ENCODE measurements at regions of chr1 and their contacts with region 1.

Region 1: DNA sequence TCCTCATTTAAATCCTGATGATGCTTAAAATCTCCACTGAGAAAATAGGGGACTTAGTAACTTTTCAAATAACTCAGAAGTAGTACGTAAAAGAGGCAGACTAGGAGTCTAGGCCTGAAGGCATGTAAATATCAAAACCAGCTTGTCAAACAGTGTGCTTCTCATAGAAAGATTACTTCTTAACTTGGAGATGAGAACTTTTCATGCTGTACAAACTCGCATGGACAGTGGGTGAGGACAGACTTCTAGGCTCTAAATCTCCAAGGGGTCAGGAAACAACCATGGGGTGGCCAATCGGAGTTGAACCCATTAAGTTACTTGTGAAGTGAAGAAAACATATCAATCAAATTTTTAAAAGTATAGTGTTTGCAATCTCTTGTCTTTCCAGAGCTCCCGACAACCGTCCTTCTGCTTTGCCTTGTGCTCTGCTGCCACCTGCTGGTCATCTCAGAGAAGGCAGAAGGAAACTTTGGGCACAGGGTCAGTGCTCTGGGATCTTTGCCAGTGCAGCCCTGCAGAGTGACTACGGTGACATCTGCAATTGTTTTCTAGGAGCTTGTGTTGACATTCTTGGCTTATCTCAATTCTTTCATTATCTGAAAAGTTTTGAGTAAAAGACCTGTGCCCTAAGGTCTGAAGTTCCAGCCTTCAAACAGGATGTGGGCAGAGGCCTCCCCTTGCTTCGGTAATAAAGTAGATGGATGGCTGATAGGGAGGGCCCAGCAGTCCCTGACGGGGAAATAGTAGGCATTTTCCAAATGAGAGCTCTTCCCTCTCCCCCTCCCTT is 105.1 kb upstream of the PDE4B start:
- DNase-seq: peak; percentile 88
- H3K4me3 Mint-ChIP-seq: no peak overlapping the region
- H3K27ac Mint-ChIP-seq: no peak overlapping the region
- H3K4me1 Mint-ChIP-seq: peaks cover 6% of the 10 kb centered on the region
- H3K27me3 Mint-ChIP-seq: peaks cover 9% of the 10 kb centered on the region

Region 2: DNA sequence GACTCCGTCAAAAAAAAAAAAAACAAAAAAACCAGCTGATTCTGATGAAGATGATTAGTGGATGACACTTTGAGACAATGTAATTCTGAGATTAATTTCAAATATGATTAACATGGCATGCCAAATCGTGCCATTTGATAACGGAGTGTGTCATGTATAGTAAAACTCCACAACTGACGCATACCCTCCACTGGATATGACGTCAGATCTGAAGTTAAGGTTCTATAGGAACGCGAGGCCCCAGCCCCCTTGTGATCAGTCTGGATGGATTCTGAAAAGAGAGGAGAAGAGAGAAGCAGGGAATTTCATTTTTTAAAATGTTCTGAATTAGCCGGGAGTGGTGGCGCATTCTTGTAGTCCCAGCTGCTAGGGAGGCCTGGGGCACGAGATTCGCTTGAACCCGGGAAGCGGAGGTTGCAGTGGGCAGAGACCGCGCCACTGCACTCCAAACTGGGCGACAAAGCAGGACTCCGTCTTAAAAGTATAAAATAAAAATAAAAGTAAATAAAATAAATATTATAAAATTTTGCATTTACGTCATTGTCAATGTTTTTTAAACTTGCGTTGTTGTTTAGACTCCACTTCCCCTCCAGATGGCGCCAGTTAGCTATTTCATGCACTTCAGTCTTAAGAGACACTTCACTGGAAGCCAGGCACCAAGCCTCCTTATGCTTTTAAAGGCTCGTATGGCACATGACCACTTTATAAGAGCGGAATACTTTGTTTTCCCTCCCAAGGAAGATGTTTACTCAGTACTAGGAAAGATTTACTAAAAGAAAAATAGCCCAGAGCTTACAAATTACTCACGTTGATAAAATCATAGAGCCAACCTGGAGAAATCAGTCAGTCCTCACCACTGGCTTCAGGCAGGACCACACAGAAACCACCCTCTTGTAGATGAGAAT is 1418.7 kb before region 1 on chr1:
- CTCF ChIA-PET with region 1: no interaction called
- intact Hi-C with region 1: loop called (anchors 1 kb)
- DNase-seq: peak; percentile 85
- H3K4me3 Mint-ChIP-seq: no peak overlapping the region
- H3K27ac Mint-ChIP-seq: no peak overlapping the region
- H3K4me1 Mint-ChIP-seq: peaks cover 2% of the 10 kb centered on the region
- H3K27me3 Mint-ChIP-seq: peaks cover 15% of the 10 kb centered on the region

Region 3: DNA sequence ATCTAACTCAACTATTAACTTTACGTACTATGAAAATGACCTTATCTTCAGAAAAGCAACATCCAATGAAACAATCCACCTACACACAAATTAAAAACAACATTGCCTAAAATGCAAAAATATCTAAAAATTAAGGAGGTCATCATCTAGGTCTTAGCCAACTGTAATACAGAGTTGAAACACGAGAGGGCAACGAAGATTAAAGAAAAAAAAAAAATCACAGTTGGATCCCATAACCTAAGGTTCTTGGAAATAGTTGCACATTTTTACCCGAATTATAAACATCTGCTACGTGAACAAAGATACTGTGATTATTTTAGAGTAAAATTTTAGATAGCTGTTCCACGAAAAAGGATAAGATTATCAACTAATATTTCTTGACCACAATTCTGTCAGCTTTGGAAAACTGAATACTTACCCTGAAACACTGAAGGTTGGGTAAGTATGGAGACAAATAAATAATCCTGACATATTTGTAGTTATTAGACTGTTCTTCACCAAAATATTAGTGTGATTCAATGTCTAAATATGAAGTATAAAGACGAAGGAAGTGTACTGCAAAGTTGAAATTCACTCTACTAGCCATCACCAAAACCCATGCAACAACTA is 627.6 kb before region 1 on chr1:
- CTCF ChIA-PET with region 1: interaction called, 10 read pairs
- intact Hi-C with region 1: loop called (anchors 1 kb)
- DNase-seq: no peak
- H3K4me3 Mint-ChIP-seq: no peak overlapping the region
- H3K27ac Mint-ChIP-seq: no peak overlapping the region
- H3K4me1 Mint-ChIP-seq: peaks cover 61% of the 10 kb centered on the region
- H3K27me3 Mint-ChIP-seq: no peaks in the 10 kb centered on the region

Region 4: DNA sequence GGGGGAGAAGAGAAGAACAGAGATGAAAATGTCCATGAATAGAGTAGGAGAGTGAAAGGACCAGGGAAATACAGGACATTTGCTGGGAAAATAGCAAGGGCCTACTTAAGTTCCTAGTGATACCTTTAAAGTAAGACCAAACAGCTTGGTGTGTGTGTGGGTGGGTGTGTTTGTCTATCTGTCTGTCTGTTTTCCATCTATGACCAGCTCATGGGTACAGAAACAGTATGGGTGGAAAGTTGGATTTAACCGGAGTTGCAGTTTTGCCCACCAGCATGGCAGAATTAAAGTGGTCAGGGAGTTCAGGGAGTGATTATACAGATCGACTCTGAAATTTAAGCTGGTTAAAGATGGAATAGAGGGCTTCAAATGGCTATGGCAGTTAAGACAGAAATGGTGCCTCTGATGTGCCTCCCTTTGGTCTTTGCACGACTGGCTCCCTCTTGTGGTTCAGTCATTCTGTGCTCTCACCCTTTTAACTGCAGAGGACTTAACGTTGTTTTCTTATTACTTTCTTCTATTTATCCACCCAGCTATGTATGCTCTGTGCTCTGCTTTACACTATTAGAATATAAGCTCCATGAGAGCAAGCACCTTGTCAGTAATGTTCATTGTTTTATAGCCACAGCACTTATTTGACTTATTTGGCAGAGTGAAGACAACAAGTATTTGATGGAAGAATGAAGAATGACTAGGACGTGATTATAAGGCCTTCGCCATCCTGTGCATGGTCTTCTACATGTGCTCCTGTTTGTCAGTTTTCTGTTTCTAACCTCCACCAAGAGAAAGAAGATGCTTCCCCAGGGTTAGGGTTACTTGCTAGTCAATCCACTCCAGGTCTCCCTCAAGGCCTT is 612.3 kb before region 1 on chr1:
- CTCF ChIA-PET with region 1: interaction called, 5 read pairs
- intact Hi-C with region 1: loop called (anchors 1 kb)
- DNase-seq: peak; percentile 84
- H3K4me3 Mint-ChIP-seq: no peak overlapping the region
- H3K27ac Mint-ChIP-seq: no peak overlapping the region
- H3K4me1 Mint-ChIP-seq: peaks cover 20% of the 10 kb centered on the region
- H3K27me3 Mint-ChIP-seq: no peaks in the 10 kb centered on the region

Region 5: GRCh38 chr1:65230731-65231481 is 456.7 kb before region 1 on chr1:
- CTCF ChIA-PET with region 1: interaction called, 45 read pairs
- intact Hi-C with region 1: loop called (anchors 1 kb)
- DNase-seq: peak; percentile 31
- H3K4me3 Mint-ChIP-seq: no peak overlapping the region
- H3K27ac Mint-ChIP-seq: no peak overlapping the region
- H3K4me1 Mint-ChIP-seq: peaks cover 14% of the 10 kb centered on the region
- H3K27me3 Mint-ChIP-seq: peaks cover 4% of the 10 kb centered on the region

Region 6: GRCh38 chr1:65431111-65431705 is 256.4 kb before region 1 on chr1:
- CTCF ChIA-PET with region 1: interaction called, 8 read pairs
- intact Hi-C with region 1: loop called (anchors 1 kb)
- DNase-seq: no peak
- H3K4me3 Mint-ChIP-seq: no peak overlapping the region
- H3K27ac Mint-ChIP-seq: no peak overlapping the region
- H3K4me1 Mint-ChIP-seq: no peaks in the 10 kb centered on the region
- H3K27me3 Mint-ChIP-seq: no peaks in the 10 kb centered on the region

Region 7: GRCh38 chr1:66521721-66522365 is 834.2 kb after region 1 on chr1:
- CTCF ChIA-PET with region 1: no interaction called
- intact Hi-C with region 1: no loop called
- DNase-seq: no peak
- H3K4me3 Mint-ChIP-seq: no peak overlapping the region
- H3K27ac Mint-ChIP-seq: no peak overlapping the region
- H3K4me1 Mint-ChIP-seq: no peaks in the 10 kb centered on the region
- H3K27me3 Mint-ChIP-seq: no peaks in the 10 kb centered on the region

Measured in activated naive CD4-positive, alpha-beta T cell treated with anti-CD3 and anti-CD28 coated beads for 36 hours (primary cell).